ENCODE measurements at regions of chr6 and their contacts with region 1.

Region 1: GRCh38 chr6:32984605-32985389 is 16.4 kb downstream of the BRD2 start:
- DNase-seq: peak; percentile 82 to 94 (median 91)
- ATAC-seq: peak; percentile 96
- H3K4me3 ChIP-seq: no peak overlapping the region
- H3K4me3 Mint-ChIP-seq: no peak overlapping the region
- H3K27ac ChIP-seq: peak overlapping the region in 1 of 2 experiments; percentile 44
- H3K27ac Mint-ChIP-seq: no peak overlapping the region
- H3K4me1 ChIP-seq: peaks cover 5% of the 10 kb centered on the region
- H3K4me1 Mint-ChIP-seq: peaks cover 20% of the 10 kb centered on the region
- H3K27me3 ChIP-seq: no peaks in the 10 kb centered on the region
- H3K27me3 Mint-ChIP-seq: no peaks in the 10 kb centered on the region
- CTCF ChIP-seq: peak; percentile 87

Region 2: DNA sequence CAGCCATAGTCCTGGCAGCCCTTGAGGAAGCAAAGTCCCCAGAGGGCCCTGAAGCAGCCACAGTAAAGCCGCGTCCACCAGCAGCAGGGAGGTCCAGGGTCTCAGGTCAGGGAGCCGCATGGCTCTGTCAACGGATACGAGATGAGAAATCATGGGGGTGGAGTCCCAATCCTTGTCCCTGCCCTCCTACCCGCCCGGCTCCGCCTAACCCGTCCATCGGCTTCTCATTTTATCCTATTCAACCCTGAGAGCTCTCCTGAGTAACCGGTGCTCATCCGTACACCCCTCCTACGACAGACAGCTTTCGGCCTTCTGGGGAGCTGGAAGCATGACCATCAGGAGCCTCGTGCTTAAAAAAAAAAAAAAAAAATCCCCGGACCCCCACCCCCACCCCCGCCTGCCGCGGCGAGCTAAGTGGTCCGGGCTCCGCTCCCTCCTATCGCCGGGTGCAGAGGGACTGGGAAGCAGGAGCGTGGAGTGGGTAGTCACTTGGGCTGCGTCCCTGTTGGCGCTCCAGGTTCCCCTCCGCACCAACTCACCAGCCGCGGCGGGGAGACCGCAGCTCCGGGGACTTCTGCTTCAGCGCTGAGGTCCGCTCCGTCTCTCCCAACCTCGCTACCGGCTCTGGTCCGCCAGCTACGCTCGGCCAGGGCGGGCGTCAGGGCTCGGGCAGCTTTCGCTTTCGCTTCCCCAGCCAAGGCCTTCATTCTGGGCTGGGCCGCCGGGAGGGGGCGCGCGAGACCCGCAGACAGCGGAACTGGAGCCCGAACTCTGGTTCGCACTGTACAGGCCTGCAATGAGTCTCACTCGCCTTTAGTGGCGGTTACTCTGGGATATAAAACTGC is 146.5 kb before region 1 on chr6 and contains the start of gene TAP2:
- CTCF ChIA-PET with region 1: interaction called, 38 read pairs
- POLR2A ChIA-PET with region 1: interaction called, 6 read pairs
- intact Hi-C with region 1: no loop called
- DNase-seq: peak; percentile 96 to 99 (median 97)
- ATAC-seq: peak; percentile 90
- H3K4me3 ChIP-seq: peak within 1 kb of the TSS; percentile 64 to 83
- H3K4me3 Mint-ChIP-seq: peak within 1 kb of the TSS; percentile 93
- H3K27ac ChIP-seq: peak within 1 kb of the TSS; percentile 88 to 100
- H3K27ac Mint-ChIP-seq: peak within 1 kb of the TSS; percentile 98
- H3K4me1 ChIP-seq: peaks cover 60% of the 10 kb centered on the region
- H3K4me1 Mint-ChIP-seq: peaks cover 89% of the 10 kb centered on the region
- H3K27me3 ChIP-seq: no peaks in the 10 kb centered on the region
- H3K27me3 Mint-ChIP-seq: no peaks in the 10 kb centered on the region
- CTCF ChIP-seq: peak; percentile 99
- total RNA-seq, gene TAP2: 88.9 to 91.0 TPM

Region 3: DNA sequence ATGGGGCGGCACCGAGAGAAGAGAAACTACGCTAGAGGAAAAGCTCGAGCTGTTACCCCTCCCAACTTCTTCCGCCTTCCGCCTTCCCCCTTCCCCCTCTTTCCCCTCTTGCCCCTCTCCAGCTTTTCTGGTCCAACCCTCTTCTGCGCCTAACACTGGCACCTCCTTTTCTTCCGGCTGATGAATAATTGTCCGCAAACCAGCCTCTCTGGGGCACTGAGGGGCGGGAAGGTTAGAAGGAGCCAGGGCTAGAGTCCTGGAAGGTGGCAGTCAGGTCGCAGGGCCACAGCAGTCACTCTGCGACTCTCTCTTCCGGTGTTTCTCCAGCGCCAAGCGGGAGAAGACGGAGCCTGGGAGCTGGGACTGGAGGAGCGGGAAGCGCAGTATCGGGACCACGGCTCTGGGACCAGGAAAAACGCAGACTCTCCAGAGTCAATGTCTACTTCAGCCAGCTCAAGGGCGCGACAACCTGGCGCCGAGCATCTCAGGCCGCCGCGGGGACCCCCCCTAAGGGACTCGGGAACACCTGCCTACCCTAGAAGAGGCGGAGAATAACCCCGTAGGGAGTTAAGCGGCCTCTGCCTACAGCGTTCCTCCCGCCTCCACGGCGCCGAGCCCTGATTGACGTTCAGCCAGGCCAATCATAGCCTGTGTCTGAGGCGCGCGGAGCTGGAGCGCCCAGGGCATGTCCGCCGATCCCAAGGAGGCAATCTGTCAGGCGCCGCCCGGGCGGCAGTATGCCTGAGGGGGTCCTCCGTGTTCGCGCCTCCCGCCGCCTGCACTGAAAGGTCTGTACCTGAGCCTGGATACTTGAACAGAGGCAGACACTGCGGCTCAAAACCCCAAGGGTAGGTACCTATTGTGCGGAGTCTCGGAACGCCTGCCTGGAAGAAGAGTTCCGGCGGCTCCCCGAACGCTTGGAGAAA is 90.5 kb before region 1 on chr6:
- CTCF ChIA-PET with region 1: interaction called, 229 read pairs
- POLR2A ChIA-PET with region 1: interaction called, 6 read pairs
- intact Hi-C with region 1: no loop called
- DNase-seq: peak; percentile 88 to 98 (median 95)
- ATAC-seq: peak; percentile 96
- H3K4me3 ChIP-seq: peak overlapping the region; percentile 89 to 92
- H3K4me3 Mint-ChIP-seq: peak overlapping the region; percentile 99
- H3K27ac ChIP-seq: peak overlapping the region; percentile 62 to 89
- H3K27ac Mint-ChIP-seq: peak overlapping the region; percentile 97
- H3K4me1 ChIP-seq: peaks cover 20% of the 10 kb centered on the region
- H3K4me1 Mint-ChIP-seq: peaks cover 46% of the 10 kb centered on the region
- H3K27me3 ChIP-seq: no peaks in the 10 kb centered on the region
- H3K27me3 Mint-ChIP-seq: no peaks in the 10 kb centered on the region
- CTCF ChIP-seq: no peak

Region 4: DNA sequence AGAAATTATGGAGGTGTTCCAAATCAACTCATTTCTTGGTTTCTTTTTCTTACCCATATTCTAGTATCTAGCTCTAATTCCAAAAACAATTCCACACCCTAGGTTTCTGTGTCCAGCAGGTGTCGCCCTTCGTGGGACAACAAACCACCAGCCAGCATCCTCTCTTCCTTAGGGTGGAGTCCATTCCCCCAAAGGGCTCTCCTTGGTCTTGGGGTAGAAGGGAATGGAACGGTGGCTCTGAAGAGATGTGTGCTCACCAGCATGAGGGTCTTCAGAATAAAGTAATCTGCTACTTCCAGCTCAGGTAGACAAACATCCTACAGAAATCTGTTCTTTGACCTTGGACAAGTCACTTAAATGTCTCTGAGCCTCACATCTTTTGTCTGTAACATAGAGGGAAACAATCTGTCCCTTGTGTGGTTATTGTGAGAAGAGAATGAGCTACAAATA is 51.1 kb before region 1 on chr6:
- CTCF ChIA-PET with region 1: interaction called, 243 read pairs
- POLR2A ChIA-PET with region 1: interaction called, 21 read pairs
- intact Hi-C with region 1: loop called (anchors 1 kb)
- DNase-seq: peak; percentile 50 to 87 (median 81)
- ATAC-seq: peak; percentile 61
- H3K4me3 ChIP-seq: no peak overlapping the region
- H3K4me3 Mint-ChIP-seq: no peak overlapping the region
- H3K27ac ChIP-seq: no peak overlapping the region
- H3K27ac Mint-ChIP-seq: no peak overlapping the region
- H3K4me1 ChIP-seq: no peaks in the 10 kb centered on the region
- H3K4me1 Mint-ChIP-seq: peaks cover 5% of the 10 kb centered on the region
- H3K27me3 ChIP-seq: no peaks in the 10 kb centered on the region
- H3K27me3 Mint-ChIP-seq: no peaks in the 10 kb centered on the region
- CTCF ChIP-seq: peak; percentile 72

Region 5: DNA sequence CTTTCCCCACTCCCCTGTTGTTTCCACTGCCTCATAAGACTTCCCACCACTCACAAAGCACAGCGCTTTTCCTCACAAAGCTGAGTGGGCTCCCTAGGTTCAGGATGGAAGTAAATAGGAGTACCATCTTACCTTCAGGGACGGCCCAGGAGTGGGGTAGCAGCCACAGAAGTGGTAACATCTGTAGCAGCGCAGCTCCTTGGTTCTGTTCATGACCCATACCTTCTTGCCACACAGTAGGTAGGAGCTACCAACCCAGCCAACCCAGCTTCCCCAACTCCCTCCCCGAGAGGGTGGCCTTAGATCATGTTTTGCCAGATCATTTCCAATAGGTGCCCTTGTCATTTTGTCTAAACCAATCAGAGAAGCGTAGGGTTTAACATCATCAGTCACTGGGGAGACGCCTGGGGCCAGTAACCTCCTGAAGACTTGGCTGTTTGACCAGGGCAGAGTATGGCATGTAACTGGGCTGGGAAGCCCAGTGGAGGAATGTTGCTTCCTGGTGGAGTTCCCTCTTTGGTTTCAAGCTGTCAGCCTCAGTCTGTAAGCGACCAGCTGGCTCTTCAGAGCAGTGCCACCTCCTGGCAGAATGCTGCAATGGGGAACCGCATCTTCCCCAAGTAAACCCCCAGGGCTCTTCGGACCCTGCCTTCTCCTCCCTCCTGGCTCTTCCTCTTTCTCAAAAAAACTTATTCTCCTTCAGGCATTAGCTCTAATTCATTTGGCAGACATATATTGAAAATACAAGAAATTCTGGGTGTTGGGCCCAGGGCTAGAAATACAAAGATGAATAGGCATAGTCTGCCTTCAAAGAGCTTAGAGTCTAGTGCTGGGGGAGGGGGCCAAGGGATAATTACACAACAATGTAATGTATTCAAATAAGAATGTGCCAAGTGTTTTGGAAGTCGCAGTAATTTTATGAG is 31.7 kb before region 1 on chr6 and contains the start of gene HLA-DMA:
- CTCF ChIA-PET with region 1: interaction called, 662 read pairs
- POLR2A ChIA-PET with region 1: interaction called, 18 read pairs
- intact Hi-C with region 1: loop called in 1 of 2 experiments (anchors 1 kb)
- DNase-seq: peak; percentile 55 to 92 (median 77)
- ATAC-seq: peak; percentile 98
- H3K4me3 ChIP-seq: peak within 1 kb of the TSS; percentile 49 to 52
- H3K4me3 Mint-ChIP-seq: peak within 1 kb of the TSS; percentile 85
- H3K27ac ChIP-seq: peak within 1 kb of the TSS; percentile 28 to 66
- H3K27ac Mint-ChIP-seq: peak within 1 kb of the TSS; percentile 93
- H3K4me1 ChIP-seq: peaks cover 29% of the 10 kb centered on the region
- H3K4me1 Mint-ChIP-seq: peaks cover 55% of the 10 kb centered on the region
- H3K27me3 ChIP-seq: no peaks in the 10 kb centered on the region
- H3K27me3 Mint-ChIP-seq: no peaks in the 10 kb centered on the region
- CTCF ChIP-seq: peak; percentile 86
- total RNA-seq, gene HLA-DMA: 25.9 to 32.3 TPM

Region 6: DNA sequence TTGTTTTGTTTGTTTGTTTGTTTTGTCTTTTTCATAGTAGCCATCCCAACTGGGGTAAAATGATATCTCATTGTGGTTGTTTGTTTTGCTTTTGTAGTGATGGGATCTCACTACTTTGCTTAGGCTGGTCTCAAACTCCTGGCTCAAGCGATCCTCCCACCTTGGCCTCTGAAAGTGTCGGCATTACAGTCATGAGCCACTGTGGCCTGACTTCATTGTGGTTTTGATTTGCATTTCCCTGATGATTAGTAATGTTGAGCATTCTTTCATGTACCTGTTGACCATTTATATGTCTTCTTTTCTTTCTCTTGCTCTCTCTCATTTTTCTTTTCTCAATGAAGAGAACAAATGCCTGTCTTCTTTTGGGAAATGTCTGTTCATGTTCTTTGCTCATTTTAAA is 55.4 kb after region 1 on chr6:
- CTCF ChIA-PET with region 1: no interaction called
- POLR2A ChIA-PET with region 1: no interaction called
- intact Hi-C with region 1: no loop called
- DNase-seq: no peak
- ATAC-seq: no peak
- H3K4me3 ChIP-seq: no peak overlapping the region
- H3K4me3 Mint-ChIP-seq: no peak overlapping the region
- H3K27ac ChIP-seq: no peak overlapping the region
- H3K27ac Mint-ChIP-seq: no peak overlapping the region
- H3K4me1 ChIP-seq: no peaks in the 10 kb centered on the region
- H3K4me1 Mint-ChIP-seq: no peaks in the 10 kb centered on the region
- H3K27me3 ChIP-seq: no peaks in the 10 kb centered on the region
- H3K27me3 Mint-ChIP-seq: peaks cover 11% of the 10 kb centered on the region
- CTCF ChIP-seq: no peak